MCF 10A (cell line): ENCODE measurements at regions of chr1 and their contacts with region 1.

Region 1: DNA sequence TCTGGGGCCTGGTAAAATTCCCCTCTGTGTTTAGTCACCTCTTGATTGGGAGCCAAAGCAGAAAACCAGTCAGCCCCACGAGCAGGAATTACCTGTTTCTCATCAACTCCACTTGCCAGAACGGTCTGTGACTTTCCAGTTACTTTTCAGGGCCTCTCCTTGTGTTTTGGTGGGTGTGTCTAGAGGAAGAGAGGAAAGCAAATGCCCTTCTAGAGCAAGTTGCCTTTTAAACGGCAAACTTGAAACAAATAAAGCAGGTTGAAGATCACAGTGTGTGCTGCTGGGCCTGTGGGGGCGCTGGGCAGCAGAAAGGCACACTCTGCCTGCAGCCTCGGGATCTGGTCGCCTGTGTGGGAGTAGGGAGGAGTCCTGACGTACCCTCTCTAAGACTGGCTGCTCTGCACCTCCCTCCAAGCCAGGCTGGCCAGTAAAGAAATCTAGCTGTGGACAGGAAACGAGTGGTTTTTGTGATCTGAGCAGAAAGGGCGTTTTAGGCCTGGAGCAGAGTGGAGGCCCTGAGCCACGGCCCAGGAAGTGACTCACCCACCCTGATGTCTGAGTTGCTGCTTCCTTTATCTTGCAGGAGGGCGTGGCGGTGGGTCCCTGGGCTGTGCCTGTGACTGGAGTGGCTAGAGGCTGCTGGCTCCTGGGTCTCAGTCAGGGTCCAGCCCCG is 11.1 kb upstream of the S100A11 start:
- DNase-seq: peak; percentile 100
- H3K4me3 Mint-ChIP-seq: peak overlapping the region; percentile 62
- H3K27ac Mint-ChIP-seq: peak overlapping the region; percentile 98
- H3K4me1 Mint-ChIP-seq: peaks cover 55% of the 10 kb centered on the region
- H3K27me3 Mint-ChIP-seq: no peaks in the 10 kb centered on the region
- CTCF ChIP-seq: peak; percentile 58

Region 2: DNA sequence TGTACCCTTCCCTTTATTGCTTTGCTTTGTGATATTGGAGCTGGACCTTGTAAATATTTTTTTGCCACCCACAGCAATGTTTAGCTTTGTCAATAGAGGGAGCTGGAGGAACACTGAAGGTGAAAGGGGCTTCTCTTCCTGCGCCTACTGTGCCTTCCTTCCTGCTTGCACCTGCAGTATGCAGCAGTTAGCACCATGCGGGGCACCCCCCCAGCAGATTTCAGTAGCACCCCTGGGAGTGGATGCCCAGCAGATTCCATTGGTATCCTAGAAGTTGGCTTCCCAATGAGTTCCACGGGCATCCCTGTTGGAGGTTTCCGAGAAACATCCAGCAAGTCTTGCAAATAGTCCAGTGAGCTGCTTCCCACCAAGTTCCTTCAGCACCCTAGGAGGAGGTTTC is 79.8 kb before region 1 on chr1:
- CTCF ChIA-PET with region 1: interaction called, 3 read pairs
- POLR2A ChIA-PET with region 1: interaction called, 28 read pairs
- intact Hi-C with region 1: no loop called
- DNase-seq: peak; percentile 86
- H3K4me3 Mint-ChIP-seq: no peak overlapping the region
- H3K27ac Mint-ChIP-seq: no peak overlapping the region
- H3K4me1 Mint-ChIP-seq: peaks cover 34% of the 10 kb centered on the region
- H3K27me3 Mint-ChIP-seq: no peaks in the 10 kb centered on the region
- CTCF ChIP-seq: peak; percentile 91

Region 3: DNA sequence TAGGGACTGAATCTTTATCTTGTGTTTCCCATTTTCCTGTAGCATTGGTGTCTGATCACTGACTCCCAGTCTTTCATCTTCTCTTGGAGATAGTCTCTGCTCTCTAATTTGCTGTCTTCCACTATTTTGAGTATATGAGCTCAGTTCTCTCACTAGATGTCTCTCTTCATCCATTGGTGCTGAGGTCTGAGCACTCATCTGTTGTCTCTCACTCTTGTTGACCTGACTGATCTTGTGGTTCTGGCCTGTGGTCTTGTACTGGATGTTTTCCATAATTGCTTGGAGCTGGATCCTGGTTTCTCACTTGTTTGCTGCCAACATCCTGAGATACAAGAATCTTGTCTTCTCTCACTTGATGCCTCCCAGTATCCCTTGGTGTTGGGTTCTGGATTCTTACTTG is 14.1 kb after region 1 on chr1:
- CTCF ChIA-PET with region 1: interaction called, 17 read pairs
- POLR2A ChIA-PET with region 1: interaction called, 5 read pairs
- intact Hi-C with region 1: no loop called
- DNase-seq: no peak
- H3K4me3 Mint-ChIP-seq: no peak overlapping the region
- H3K27ac Mint-ChIP-seq: no peak overlapping the region
- H3K4me1 Mint-ChIP-seq: no peaks in the 10 kb centered on the region
- H3K27me3 Mint-ChIP-seq: peaks cover 17% of the 10 kb centered on the region
- CTCF ChIP-seq: no peak

Region 4: GRCh38 chr1:152127670-152128069 is 79.8 kb after region 1 on chr1:
- CTCF ChIA-PET with region 1: interaction called, 10 read pairs
- POLR2A ChIA-PET with region 1: no interaction called
- intact Hi-C with region 1: no loop called
- DNase-seq: no peak
- H3K4me3 Mint-ChIP-seq: no peak overlapping the region
- H3K27ac Mint-ChIP-seq: no peak overlapping the region
- H3K4me1 Mint-ChIP-seq: no peaks in the 10 kb centered on the region
- H3K27me3 Mint-ChIP-seq: no peaks in the 10 kb centered on the region
- CTCF ChIP-seq: no peak

Region 5: GRCh38 chr1:152162806-152163463 is 115.1 kb after region 1 on chr1:
- CTCF ChIA-PET with region 1: interaction called, 28 read pairs
- POLR2A ChIA-PET with region 1: interaction called, 66 read pairs
- intact Hi-C with region 1: no loop called
- DNase-seq: peak; percentile 84
- H3K4me3 Mint-ChIP-seq: no peak overlapping the region
- H3K27ac Mint-ChIP-seq: peak overlapping the region; percentile 99
- H3K4me1 Mint-ChIP-seq: peaks cover 57% of the 10 kb centered on the region
- H3K27me3 Mint-ChIP-seq: no peaks in the 10 kb centered on the region
- CTCF ChIP-seq: no peak

Region 6: DNA sequence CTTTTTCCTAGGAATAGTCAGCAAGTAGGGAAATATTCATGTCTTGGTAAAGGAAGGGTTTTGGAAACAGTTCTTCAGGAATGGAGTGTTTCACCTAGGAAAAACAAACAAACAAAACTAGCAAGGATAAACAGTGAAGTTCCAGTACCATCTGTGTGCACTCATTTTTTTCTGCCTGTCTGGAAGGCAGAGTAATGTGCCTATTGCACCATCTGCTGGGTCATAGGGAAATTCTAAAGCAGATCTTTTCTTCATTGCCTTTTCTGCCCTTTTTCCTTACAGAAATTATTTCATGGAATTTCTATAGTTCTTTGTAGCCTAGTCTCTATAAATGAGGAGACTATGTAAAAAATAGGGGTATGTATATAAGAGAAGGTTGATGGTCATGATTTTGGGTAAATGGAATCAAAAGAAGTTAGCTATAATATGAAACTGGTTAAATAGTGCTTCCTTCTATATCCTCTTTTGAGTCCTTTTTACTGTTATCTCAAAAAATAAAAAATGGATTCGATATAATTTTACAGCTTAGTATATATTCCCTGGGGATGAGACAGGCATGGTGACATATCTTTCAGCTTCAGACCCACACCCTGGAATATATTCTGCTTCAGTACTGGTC is 179.6 kb after region 1 on chr1:
- CTCF ChIA-PET with region 1: interaction called, 15 read pairs
- POLR2A ChIA-PET with region 1: interaction called, 4 read pairs
- intact Hi-C with region 1: loop called (anchors 1 kb)
- DNase-seq: peak; percentile 66
- H3K4me3 Mint-ChIP-seq: no peak overlapping the region
- H3K27ac Mint-ChIP-seq: no peak overlapping the region
- H3K4me1 Mint-ChIP-seq: peaks cover 17% of the 10 kb centered on the region
- H3K27me3 Mint-ChIP-seq: no peaks in the 10 kb centered on the region
- CTCF ChIP-seq: peak; percentile 79

Region 7: GRCh38 chr1:153095764-153096163 is 1047.9 kb after region 1 on chr1:
- CTCF ChIA-PET with region 1: no interaction called
- POLR2A ChIA-PET with region 1: no interaction called
- intact Hi-C with region 1: no loop called
- DNase-seq: no peak
- H3K4me3 Mint-ChIP-seq: no peak overlapping the region
- H3K27ac Mint-ChIP-seq: no peak overlapping the region
- H3K4me1 Mint-ChIP-seq: peaks cover 23% of the 10 kb centered on the region
- H3K27me3 Mint-ChIP-seq: no peaks in the 10 kb centered on the region
- CTCF ChIP-seq: no peak